OCI-LY7 (cell line): ENCODE measurements at regions of chr22 and their contacts with region 1.

Region 1: GRCh38 chr22:33202455-33202854 is 144.3 kb upstream of the SYN3 start:
- DNase-seq: peak; percentile 29
- H3K4me3 ChIP-seq: no peak overlapping the region
- H3K27ac ChIP-seq: no peak overlapping the region
- H3K4me1 ChIP-seq: peaks cover 46% of the 10 kb centered on the region
- CTCF ChIP-seq: no peak

Region 2: GRCh38 chr22:32660292-32660691 is 542.2 kb before region 1 on chr22:
- CTCF ChIA-PET with region 1: no interaction called
- POLR2A ChIA-PET with region 1: no interaction called
- intact Hi-C with region 1: loop called (anchors 1 kb)
- DNase-seq: peak; percentile 66
- H3K4me3 ChIP-seq: no peak overlapping the region
- H3K27ac ChIP-seq: no peak overlapping the region
- H3K4me1 ChIP-seq: no peaks in the 10 kb centered on the region
- CTCF ChIP-seq: peak; percentile 82

Region 3: DNA sequence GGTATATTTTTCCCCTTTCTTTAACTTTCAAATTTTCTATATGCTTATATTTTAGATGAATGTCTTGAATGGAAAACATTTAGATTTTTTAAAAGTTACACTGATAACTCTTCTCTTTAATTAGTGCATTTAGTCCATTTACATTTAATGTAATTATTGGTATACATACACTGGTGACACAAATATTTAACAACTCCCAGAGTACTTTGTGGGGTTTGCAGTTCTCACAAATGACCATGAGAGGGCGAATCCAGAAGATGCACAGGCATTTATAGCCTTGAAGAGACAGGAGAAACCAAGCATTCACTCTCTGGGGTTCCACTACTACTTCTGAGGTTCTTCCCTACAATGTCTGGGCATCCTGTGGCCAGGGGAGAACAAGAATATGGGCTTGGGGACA is 275.9 kb before region 1 on chr22:
- CTCF ChIA-PET with region 1: no interaction called
- POLR2A ChIA-PET with region 1: no interaction called
- intact Hi-C with region 1: loop called (anchors 1 kb)
- DNase-seq: peak; percentile 47
- H3K4me3 ChIP-seq: no peak overlapping the region
- H3K27ac ChIP-seq: no peak overlapping the region
- H3K4me1 ChIP-seq: no peaks in the 10 kb centered on the region
- CTCF ChIP-seq: peak; percentile 82

Region 4: DNA sequence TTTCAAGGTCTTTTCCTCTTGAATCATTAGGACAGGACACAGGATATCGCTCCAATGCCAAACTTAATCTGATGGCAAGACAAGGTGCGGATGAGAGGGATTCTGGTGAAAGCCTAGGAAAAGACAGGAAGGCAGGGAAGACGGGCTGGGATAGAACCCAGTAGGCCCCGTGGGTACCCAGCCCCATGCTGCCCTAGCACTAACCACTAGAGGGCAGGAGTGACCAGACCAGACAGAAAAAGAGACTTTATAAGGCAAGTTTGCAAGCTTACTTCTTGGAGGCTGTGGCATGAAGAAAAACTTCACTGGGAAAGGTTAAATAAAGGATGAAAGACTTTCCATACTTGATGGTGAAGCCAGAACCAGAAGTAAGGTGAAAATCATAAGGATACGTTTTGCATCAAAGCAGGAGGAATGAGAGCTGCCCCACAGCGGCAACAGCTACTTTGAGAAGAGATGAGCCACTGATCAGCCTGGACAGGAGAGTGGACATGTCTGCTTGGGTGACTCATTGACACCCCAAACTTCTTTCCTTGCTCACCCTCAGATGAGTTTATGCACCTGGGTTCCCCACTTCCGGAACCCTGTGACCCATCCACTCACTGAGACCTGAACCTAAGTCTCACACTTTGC is 184.1 kb before region 1 on chr22:
- CTCF ChIA-PET with region 1: interaction called, 39 read pairs
- POLR2A ChIA-PET with region 1: interaction called, 10 read pairs
- intact Hi-C with region 1: loop called (anchors 1 kb)
- DNase-seq: peak; percentile 71
- H3K4me3 ChIP-seq: no peak overlapping the region
- H3K27ac ChIP-seq: no peak overlapping the region
- H3K4me1 ChIP-seq: peaks cover 18% of the 10 kb centered on the region
- CTCF ChIP-seq: peak; percentile 98

Region 5: GRCh38 chr22:33049119-33049729 is 153.2 kb before region 1 on chr22:
- CTCF ChIA-PET with region 1: interaction called, 4 read pairs
- POLR2A ChIA-PET with region 1: interaction called, 3 read pairs
- intact Hi-C with region 1: loop called (anchors 1 kb)
- DNase-seq: peak; percentile 86
- H3K4me3 ChIP-seq: no peak overlapping the region
- H3K27ac ChIP-seq: no peak overlapping the region
- H3K4me1 ChIP-seq: peaks cover 14% of the 10 kb centered on the region
- CTCF ChIP-seq: peak; percentile 95

Region 6: GRCh38 chr22:33083212-33083611 is 119.2 kb before region 1 on chr22:
- CTCF ChIA-PET with region 1: interaction called, 6 read pairs
- POLR2A ChIA-PET with region 1: interaction called, 9 read pairs
- intact Hi-C with region 1: loop called (anchors 1 kb)
- DNase-seq: peak; percentile 52
- H3K4me3 ChIP-seq: no peak overlapping the region
- H3K27ac ChIP-seq: no peak overlapping the region
- H3K4me1 ChIP-seq: no peaks in the 10 kb centered on the region
- CTCF ChIP-seq: peak; percentile 84

Region 7: DNA sequence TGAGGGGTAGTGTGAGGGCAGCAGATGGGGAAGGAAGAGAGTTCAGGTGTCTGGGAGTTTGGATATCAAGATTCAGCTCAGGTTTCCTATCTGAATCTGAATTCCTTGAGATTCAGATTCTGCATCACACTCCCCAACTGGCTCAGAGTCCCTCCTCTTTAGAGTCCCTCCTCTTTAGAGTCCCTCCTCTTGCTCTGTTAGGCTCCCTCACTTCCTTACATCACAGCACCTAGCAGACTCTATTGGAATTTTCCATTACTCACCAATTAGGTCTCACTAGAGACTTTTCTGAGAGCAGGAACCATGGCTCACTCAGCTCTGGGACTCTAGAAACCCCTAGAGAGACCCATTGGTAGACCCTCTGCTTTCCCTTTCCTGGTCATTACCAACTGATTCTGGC is 159.1 kb after region 1 on chr22:
- CTCF ChIA-PET with region 1: no interaction called
- POLR2A ChIA-PET with region 1: no interaction called
- intact Hi-C with region 1: no loop called
- DNase-seq: peak; percentile 7
- H3K4me3 ChIP-seq: no peak overlapping the region
- H3K27ac ChIP-seq: no peak overlapping the region
- H3K4me1 ChIP-seq: peaks cover 9% of the 10 kb centered on the region
- CTCF ChIP-seq: no peak